AG04449 (cell line): ENCODE measurements at regions of chr2 and their contacts with region 1.

Region 1: DNA sequence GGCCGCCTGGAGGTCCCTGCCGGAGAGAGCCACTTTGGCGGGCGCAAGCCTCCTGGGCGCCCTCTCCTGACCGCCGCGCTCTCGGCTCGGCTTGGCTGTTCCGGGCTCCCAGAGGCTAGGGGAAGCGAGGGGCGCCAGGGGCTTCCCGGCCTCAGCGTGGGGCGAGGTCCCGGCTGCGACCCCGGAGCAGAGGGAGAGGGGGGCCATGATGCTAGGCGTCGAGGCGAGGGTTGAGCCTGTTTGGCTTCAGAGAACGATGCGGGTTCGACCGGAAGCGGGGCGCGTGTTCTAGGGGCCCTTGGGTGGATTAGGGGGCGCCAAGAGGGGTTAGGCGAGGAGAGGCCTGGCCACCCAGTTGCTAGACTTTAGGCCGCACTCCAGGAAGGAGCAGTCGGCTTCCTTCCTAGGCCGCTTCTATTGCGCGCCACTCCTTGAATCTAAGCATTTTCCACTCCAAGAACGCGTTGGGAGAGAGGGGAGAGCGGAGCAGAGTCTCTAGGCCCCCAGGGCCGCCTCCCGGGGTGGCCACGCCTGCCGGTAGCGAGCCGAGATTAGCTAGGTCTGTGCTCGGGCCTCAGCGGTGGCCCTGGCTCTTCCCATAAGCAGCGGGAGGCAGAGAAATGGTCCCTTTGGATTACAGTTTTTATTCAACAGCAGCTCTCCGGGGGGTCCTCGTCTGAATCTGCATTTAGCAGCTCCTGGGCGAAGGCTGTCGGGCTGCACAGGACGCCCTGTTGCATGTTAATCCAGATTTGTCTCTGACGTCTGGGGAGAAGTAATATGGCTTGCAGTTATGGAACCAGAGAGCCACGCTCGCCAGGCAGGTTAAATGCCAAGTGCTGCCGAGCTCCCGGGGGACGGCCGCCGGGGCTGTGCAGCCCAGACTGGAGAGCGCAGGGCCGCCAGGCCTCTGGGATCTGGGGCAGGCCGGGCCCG is 11.3 kb downstream of the MEIS1 start:
- DNase-seq: no peak
- H3K4me3 ChIP-seq: peak overlapping the region; percentile 53
- CTCF ChIP-seq: peak; percentile 38

Region 2: DNA sequence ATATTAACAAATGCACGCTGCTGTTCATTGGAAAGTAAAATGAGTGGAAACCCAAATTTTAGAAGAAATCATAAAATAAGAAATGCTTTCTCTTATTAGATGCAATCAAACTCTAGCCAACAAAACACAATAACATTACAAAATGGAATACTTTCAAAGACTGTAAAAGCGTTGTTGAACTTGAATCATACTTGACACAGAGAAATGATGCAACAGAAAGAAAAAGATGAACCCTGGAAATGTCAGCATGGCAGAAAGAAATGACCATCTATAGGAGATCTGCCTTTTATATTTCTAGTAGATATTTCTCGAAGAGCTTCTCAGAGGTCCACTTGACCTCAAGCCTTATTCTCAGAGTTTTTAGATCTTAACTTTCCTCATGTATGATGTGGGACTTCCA is 181.8 kb before region 1 on chr2:
- CTCF ChIA-PET with region 1: no interaction called
- POLR2A ChIA-PET with region 1: no interaction called
- DNase-seq: no peak
- H3K4me3 ChIP-seq: no peak overlapping the region
- CTCF ChIP-seq: no peak

Region 3: DNA sequence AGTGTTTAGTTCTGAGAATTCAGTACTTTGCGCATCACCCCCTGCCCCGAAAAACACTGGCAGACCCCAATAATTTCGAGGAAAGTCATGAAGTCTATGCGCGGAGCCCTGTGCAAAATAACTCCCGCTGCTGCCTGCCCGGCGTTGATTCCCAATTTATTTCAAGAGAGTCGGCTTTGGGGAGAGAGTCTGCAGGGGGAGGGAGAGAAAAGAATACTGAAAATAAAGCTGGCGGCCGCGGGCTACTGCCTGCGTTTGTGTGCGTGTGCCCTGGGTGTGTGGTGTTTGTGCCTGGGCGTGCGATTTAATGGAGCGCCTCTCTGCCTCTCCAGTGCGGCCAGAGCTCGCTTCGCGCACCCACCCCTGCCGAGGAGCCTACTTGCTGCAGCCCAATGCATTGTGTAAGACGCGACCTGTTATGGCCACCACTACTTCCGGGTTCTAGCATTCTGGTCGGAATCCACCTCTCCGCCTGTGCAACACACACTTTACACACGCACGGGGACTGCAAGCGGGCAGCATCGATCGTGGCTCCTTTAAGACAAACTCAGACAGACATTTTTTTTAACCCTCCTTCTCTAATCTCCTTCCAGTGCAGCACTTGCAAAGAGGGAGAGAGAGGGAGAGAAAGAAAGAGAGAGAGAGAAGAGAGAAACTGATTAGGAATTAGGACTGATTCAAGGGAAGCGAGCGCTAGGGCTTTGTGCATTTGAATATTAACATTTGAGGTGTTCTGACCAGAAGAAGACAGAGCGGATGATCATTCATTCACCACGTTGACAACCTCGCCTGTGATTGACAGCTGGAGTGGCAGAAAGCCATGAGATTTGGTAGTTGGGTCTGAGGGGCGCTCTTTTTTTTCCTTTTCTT is 11.3 kb before region 1 on chr2 and contains the start of gene MEIS1:
- CTCF ChIA-PET with region 1: interaction called, 11 read pairs
- POLR2A ChIA-PET with region 1: interaction called, 55 read pairs
- DNase-seq: peak; percentile 97
- H3K4me3 ChIP-seq: peak within 1 kb of the TSS; percentile 67
- CTCF ChIP-seq: no peak

Region 4: DNA sequence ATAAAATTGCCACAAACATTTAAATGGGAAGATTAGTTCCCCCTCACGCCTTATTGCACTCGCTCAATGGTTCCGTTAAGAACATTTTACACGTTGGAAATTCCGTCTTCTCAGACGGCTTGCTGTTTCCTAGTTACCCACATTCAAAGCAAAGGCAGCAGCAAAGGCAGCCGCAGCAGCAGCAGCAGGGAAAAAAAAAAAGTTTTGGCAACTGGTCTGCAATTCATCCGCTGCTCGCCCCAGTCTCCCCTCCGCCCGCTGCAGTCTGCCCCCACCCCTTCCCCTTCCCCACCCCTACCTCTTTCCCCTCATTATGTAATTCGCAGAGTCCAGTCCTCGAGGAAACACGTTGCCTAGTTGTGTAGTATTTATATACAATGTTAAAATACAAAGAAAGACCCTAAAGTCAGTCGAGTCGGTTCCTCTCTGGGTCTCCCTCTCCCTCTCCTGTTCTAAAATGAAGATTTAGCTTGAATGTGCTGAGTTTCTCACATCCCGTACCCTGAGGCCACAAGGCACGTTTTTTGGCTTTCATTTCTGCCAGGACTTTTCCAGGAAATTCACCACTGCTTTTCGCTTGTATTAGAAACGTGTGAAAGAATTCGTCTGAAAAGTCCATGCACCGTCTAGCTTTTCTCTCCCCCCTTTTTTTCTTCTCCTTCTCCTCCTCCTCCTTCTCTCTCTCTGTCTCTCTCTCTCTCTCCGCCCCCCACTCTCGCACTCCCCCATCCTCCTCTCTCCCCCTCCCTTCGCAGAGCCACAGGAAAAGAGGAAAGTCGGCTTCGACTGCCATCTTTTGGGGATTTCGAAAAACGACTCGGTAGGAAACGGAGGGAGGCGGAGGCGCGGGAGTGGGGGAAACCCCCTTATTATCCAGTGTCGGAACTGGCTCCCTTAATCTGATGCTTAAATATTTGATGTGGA is 128.8 kb after region 1 on chr2:
- CTCF ChIA-PET with region 1: interaction called, 10 read pairs
- POLR2A ChIA-PET with region 1: interaction called, 5 read pairs
- DNase-seq: no peak
- H3K4me3 ChIP-seq: peak overlapping the region; percentile 60
- CTCF ChIP-seq: peak; percentile 71